ENCODE measurements at regions of chr11 and their contacts with region 1.

Region 1: GRCh38 chr11:2443881-2444820 is at the start of gene TRPM5:
- DNase-seq: peak; percentile 80
- total RNA-seq, gene TRPM5: not detected

Region 2: GRCh38 chr11:469684-470560 is 1974.2 kb before region 1 on chr11:
- intact Hi-C with region 1: no loop called
- DNase-seq: peak; percentile 88

Region 3: GRCh38 chr11:2483426-2483825 is 39.3 kb after region 1 on chr11:
- intact Hi-C with region 1: loop called in 1 of 2 experiments (anchors 2 kb)
- DNase-seq: peak; percentile 28

Measured in posterior vena cava (tissue), 2 donors.